Colonic mucosa (tissue), 4 donors: ENCODE measurements at regions of chr15 and their contacts with region 1.

Region 1: DNA sequence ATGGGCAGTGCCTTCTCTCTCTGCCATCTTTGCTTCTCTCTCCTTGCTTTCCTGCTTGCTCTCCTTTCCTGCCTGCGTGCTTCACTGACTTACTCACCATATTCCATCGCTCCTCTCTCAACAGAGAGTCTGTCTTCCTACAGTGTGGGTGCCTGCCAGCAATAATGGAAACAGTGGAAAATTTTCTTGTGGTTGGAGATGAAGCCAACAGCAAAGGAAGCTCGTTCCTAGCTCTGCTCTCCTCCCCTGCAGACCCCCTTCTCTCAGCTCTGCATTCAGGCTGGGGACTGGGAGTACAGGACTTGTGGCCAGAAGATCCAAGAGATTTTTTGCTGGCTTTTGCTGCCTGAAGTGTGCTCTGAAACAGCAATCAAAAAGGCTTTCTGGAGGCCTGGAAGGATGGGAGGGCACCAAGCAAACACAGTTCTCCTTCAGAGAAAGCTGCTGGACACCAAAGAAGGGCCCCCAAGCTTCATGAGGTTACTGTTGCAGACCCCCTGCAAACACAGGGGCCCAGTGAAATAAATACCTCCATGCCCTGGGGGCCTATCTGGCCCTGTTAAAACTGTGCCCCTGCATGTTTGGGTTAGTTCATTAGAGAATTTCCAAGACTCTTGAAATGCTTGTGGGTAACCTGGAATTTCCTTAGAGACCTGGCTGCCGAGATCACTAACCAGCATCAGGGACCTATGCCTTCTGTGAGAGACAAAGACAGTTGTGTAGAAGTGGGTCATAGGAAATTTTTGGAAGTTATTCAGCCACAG is 149.9 kb upstream of the RASGRP1 start:
- DNase-seq: no peak
- H3K4me3 ChIP-seq: no peak overlapping the region
- H3K27ac ChIP-seq: no peak overlapping the region
- H3K4me1 ChIP-seq: peaks cover 1% of the 10 kb centered on the region
- H3K27me3 ChIP-seq: no peaks in the 10 kb centered on the region
- CTCF ChIP-seq: no peak

Region 2: GRCh38 chr15:39362821-39363561 is 648.5 kb after region 1 on chr15:
- intact Hi-C with region 1: no loop called
- DNase-seq: no peak
- H3K4me3 ChIP-seq: no peak overlapping the region
- H3K27ac ChIP-seq: no peak overlapping the region
- H3K4me1 ChIP-seq: no peaks in the 10 kb centered on the region
- H3K27me3 ChIP-seq: no peaks in the 10 kb centered on the region
- CTCF ChIP-seq: no peak

Region 3: DNA sequence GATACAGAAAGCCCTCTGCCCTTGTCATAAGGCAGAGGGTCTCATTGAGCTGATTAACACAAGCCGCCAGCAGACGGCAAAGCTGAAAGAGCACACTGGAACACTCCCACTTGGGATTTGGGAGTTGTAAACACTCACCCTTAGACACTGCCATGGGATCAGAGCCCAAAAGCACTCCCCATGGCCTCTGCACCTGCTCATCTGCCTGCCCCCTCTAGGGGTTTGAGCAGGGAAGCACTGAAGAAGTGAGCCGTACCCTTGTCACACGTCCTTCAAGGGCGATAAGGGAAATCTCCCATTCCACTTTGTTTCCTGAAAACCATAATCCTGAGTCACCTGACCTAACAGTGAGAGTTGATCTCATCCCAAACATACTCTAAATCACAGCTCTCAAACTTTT is 1053.4 kb after region 1 on chr15:
- intact Hi-C with region 1: loop called (anchors 10 kb)
- DNase-seq: no peak
- H3K4me3 ChIP-seq: no peak overlapping the region
- H3K27ac ChIP-seq: no peak overlapping the region
- H3K4me1 ChIP-seq: no peaks in the 10 kb centered on the region
- H3K27me3 ChIP-seq: no peaks in the 10 kb centered on the region
- CTCF ChIP-seq: no peak